Lower lobe of right lung (tissue), 2 donors: ENCODE measurements at regions of chr13 and their contacts with region 1.

Region 1: DNA sequence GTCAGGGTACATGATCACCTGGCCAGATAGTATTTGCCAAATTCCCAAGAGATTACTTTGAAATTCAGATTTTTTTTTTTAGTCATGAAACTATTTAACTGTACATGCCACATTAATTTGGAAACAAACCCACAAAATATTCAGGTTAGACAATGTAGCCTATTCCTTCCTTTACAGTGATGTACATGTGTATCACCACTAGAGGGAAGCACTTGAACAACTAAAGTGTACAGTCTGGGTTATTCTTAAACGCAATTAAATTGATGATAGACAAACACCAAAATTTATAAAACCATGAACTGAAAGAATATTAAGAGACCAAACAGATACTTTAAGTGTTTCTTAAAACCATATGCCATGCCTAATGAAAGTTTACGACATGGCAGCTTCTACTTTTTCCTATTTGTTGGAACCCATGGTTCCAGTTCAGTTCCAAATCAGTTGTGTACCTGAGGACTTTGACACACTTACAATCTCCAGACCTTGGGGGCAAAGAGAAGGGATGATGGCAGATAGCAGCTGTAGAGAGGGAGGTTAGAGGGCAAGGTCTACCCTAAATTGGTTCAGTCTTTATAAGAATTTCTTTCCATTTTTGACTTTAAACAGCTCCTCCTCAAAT is 52.8 kb downstream of the TNFSF13B start:
- DNase-seq: no peak
- ATAC-seq: peak; percentile 81 to 86
- H3K4me3 ChIP-seq: no peak overlapping the region
- H3K27ac ChIP-seq: no peak overlapping the region
- H3K4me1 ChIP-seq: no peaks in the 10 kb centered on the region
- H3K27me3 ChIP-seq: no peaks in the 10 kb centered on the region
- CTCF ChIP-seq: peak; percentile 82

Region 2: DNA sequence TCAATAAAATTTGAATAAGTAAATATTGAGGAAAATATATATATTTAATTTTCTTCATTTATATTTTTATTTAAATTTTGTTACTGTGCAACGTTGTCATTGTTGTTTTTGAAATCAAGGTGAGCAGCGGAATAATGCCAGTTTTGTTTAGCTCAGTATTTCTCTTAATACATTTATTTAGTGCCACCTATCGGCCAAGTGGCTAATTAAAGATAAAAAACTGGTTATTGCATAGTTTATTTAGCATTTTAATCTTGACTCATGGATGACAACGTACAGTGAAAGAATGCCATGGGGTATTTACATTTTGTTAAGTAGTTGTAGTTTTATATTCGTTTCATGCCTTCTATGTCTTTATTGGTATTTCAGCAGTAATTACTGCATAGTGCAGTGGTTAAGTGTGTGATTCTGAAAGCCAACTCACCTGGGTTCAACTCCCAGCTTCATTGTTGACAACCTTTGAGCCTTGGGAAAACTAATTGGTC is 572.9 kb after region 1 on chr13:
- intact Hi-C with region 1: loop called (anchors 10 kb)
- DNase-seq: no peak
- ATAC-seq: peak in 1 of 2 donors; percentile 40
- H3K4me3 ChIP-seq: no peak overlapping the region
- H3K27ac ChIP-seq: no peak overlapping the region
- H3K4me1 ChIP-seq: no peaks in the 10 kb centered on the region
- H3K27me3 ChIP-seq: no peaks in the 10 kb centered on the region
- CTCF ChIP-seq: peak; percentile 48